Left ventricle myocardium superior (tissue), 1 donor: ENCODE measurements at regions of chr5 and their contacts with region 1.

Region 1: GRCh38 chr5:42656651-42657015 is 100.0 kb upstream of the CCDC152 start:
- DNase-seq: no peak
- ATAC-seq: peak; percentile 47

Region 2: DNA sequence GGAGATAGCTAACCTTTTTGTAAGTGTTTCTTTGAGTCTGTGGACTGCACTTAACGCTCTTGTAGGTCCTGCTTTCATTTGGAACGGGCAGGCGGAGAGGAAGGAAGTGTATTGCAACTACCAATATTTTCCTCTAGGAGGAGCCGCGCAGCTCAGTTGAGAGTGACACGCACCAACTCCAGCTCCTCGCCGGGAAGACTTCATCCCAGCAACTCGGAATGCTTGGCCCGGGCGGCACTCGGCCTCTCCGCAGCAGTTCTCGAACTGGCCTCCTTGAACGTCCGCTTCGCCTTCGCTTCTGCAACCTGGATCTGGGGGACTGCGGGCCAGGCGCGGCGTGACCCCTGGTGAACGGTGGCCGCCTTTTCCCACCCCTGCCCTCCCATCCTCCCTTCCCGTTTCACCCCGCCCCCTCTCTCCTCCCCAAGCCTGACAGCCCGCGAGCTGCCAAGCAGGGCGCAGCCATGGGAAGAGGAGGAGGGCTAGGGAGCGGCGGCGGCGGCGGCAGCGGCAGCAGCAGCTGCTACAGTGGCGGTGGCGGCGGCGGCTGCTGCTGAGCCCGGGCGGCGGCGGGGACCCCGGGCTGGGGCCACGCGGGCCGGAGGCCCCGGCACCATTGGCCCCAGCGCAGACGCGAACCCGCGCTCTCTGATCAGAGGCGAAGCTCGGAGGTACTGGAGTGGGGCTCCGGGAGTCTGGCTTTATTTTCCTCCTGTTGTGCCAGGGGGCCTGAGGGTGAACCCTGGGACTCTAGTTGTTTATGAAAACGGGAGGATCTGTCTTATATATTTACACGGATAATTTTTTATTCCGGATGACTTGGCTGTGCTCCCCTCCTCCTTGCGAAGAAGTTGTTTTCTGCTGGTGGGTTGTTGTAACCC is 233.1 kb before region 1 on chr5 and contains the start of gene GHR:
- intact Hi-C with region 1: loop called (anchors 10 kb)
- DNase-seq: peak; percentile 86
- ATAC-seq: peak; percentile 95
- total RNA-seq, gene GHR: 11.9 TPM

Region 3: GRCh38 chr5:42591015-42591414 is 65.6 kb before region 1 on chr5:
- intact Hi-C with region 1: loop called (anchors 10 kb)
- DNase-seq: peak; percentile 82
- ATAC-seq: peak; percentile 88